A673 (cell line): ENCODE measurements at regions of chr15 and their contacts with region 1.

Region 1: DNA sequence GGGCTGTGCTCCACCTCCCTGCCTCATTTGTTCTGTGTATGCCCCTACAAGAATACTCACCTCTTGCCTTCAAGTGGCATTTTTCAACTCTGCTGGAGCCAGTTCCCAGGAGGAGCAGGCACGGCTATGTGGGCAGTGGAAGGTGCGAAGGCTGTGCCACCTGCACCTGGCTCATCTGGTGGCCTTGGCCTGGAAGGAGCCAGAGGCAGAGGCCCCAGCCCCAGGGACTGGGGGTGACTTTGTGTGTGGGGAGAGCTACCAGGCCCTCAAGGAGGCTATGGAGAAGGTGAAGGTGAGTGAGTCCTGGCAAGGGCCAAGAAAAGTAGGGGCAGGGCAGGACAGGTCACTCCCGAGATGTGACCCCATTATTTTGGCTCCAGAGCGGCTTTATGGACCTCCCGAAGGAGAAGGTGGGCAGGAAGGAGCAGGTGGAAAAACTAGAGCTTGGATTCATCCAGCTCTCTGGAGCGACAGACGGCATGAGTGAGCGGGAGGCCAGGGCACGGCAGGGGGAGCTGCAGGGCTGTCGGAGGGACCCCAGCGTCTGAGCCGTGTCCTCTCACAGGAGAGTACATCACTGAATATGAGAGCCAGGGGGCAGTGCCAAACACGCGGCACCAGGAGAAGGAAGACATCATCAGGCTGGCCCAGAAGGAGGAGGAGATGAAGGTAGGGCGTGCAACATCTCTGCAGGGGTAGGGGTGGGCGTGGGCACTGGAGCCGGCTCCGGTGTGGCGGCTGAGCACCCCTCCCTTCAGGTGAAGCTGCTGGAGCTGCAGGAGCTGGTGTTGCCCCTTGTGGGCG is 57.3 kb upstream of the UBE2Q2 start:
- DNase-seq: peak; percentile 72
- H3K4me3 ChIP-seq: no peak overlapping the region
- H3K27ac ChIP-seq: no peak overlapping the region
- H3K4me1 ChIP-seq: peaks cover 3% of the 10 kb centered on the region
- H3K27me3 ChIP-seq: no peaks in the 10 kb centered on the region
- CTCF ChIP-seq: peak; percentile 61

Region 2: GRCh38 chr15:75229191-75230015 is 556.6 kb before region 1 on chr15:
- CTCF ChIA-PET with region 1: no interaction called
- POLR2A ChIA-PET with region 1: no interaction called
- intact Hi-C with region 1: no loop called
- DNase-seq: no peak
- H3K4me3 ChIP-seq: no peak overlapping the region
- H3K27ac ChIP-seq: no peak overlapping the region
- H3K4me1 ChIP-seq: no peaks in the 10 kb centered on the region
- H3K27me3 ChIP-seq: peaks cover 9% of the 10 kb centered on the region
- CTCF ChIP-seq: no peak

Region 3: DNA sequence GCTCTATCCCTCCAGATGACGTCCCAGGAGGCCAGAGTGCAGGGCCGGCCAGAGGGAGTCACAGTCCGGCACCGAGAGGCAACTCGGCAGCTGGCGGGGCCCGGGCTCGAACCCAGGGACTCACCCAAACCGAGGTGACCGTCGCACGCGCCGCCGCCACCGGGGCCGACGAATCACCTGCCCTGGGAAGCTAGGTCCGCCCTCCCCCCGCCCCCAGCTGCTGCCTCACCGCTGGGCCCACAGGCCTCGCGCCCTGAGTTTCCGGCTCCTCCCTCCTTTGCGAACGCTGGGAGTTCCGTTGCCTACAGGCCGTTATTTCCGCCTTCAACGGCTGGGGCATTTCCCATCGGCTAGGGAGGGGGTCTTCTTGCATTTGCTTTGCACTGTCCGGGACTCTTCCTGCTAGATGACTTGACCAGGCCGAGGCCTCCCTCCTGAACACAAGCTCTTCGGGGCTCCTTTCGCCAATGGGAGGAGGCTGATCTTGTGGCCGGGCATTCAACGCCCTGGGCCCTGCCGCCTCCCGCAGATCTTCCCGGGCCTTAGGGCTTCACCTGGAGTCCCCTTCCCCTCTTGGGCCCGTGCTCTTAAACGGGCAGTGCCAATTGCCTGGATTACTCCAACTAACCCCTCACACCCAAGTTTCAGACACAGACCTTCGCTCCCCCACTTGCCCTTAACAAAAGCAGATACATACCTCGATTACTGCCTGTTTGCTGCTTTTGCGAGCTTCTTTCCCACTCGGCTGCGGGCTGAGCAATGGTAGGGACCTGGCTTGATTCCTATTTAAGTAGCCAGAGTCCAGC is 160.2 kb before region 1 on chr15 and contains the start of gene SNUPN:
- CTCF ChIA-PET with region 1: no interaction called
- POLR2A ChIA-PET with region 1: no interaction called
- intact Hi-C with region 1: no loop called
- DNase-seq: peak; percentile 98
- H3K4me3 ChIP-seq: peak within 1 kb of the TSS; percentile 98
- H3K27ac ChIP-seq: peak within 1 kb of the TSS; percentile 99
- H3K4me1 ChIP-seq: peaks cover 16% of the 10 kb centered on the region
- H3K27me3 ChIP-seq: no peaks in the 10 kb centered on the region
- CTCF ChIP-seq: no peak
- total RNA-seq, gene SNUPN: 32.8 and 34.6 TPM in 2 replicates

Region 4: GRCh38 chr15:76012021-76012551 is 226.1 kb after region 1 on chr15 and contains the start of gene NRG4:
- CTCF ChIA-PET with region 1: interaction called, 11 read pairs
- POLR2A ChIA-PET with region 1: no interaction called
- intact Hi-C with region 1: no loop called
- DNase-seq: no peak
- H3K4me3 ChIP-seq: peak within 1 kb of the TSS; percentile 2
- H3K27ac ChIP-seq: peak within 1 kb of the TSS; percentile 7
- H3K4me1 ChIP-seq: no peaks in the 10 kb centered on the region
- H3K27me3 ChIP-seq: peaks cover 11% of the 10 kb centered on the region
- CTCF ChIP-seq: no peak
- total RNA-seq, gene NRG4: not detected in 2 replicates

Region 5: DNA sequence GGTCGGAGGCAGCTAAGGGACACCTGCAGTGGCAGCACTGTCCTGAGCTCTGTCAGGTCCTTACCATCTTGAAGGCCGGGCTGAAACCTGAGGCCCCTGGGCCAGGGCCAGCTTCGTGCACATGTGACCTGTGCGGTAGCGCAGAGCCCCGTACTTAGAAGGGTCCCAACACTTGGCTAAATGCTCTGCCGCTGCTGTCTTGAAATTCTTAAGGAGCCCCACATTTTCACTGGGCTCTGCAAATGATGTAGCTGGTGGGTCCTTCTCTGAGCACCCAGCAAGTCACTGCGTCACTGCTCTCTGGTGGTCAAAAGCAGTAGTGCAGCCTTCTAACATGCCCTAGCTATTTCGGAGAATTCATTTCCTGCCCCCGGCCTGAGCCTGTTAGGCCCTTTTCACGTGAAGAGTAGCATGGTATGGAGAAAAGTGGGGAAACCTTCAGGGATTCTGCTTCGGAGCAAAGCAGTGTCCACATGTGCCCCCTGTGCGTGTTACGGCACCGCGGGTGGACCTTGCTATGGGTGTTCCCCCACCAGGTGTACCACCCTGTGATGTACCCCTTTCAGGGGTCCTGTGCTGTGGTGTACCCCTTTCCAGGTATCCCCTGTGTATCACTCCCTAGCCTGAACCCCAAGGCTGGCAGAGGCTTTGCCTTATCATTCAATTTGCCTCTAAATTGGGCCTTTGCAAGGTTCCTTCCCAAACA is 353.5 kb after region 1 on chr15:
- CTCF ChIA-PET with region 1: interaction called, 13 read pairs
- POLR2A ChIA-PET with region 1: no interaction called
- intact Hi-C with region 1: no loop called
- DNase-seq: peak; percentile 87
- H3K4me3 ChIP-seq: no peak overlapping the region
- H3K27ac ChIP-seq: peak overlapping the region; percentile 5
- H3K4me1 ChIP-seq: peaks cover 9% of the 10 kb centered on the region
- H3K27me3 ChIP-seq: no peaks in the 10 kb centered on the region
- CTCF ChIP-seq: peak; percentile 92

Region 6: DNA sequence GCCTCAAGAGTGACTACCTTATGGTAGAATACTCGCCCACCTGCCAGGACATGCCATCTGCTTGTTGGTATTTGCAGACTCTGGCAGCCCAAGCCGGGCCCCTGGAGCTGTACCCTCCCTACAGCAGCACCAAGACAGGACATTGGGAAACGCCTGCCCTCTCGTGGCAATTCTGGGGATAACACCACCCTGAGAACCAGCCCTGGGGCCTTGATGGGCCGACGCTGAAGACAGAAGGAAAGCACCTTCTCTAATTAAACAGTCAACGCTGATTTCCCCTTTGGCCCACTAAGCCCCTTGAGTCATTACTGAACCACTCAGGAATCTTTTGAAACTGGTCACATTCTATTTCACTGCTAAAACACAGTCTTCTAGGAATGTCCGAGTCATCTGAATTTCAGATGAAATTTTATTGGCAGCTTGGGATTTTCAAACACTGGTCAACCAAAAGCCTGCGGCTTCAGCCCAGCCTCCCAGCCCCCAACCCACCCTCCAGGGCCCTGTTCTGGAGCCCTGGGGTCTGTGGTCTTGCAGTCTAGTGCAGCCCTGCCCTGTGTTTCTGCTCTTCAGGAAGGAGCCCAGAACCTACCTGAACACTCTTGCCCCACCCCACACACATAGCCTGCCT is 365.1 kb after region 1 on chr15:
- CTCF ChIA-PET with region 1: interaction called, 3 read pairs
- POLR2A ChIA-PET with region 1: no interaction called
- intact Hi-C with region 1: loop called (anchors 10 kb)
- DNase-seq: peak; percentile 81
- H3K4me3 ChIP-seq: no peak overlapping the region
- H3K27ac ChIP-seq: no peak overlapping the region
- H3K4me1 ChIP-seq: no peaks in the 10 kb centered on the region
- H3K27me3 ChIP-seq: peaks cover under 1% of the 10 kb centered on the region
- CTCF ChIP-seq: peak; percentile 86